ENCODE measurements at regions of chr2 and their contacts with region 1.

Region 1: GRCh38 chr2:54522624-54523281 is 66.6 kb downstream of the SPTBN1 start:
- DNase-seq: peak; percentile 34 to 83 (median 74)
- ATAC-seq: peak; percentile 97
- H3K4me3 ChIP-seq: no peak overlapping the region
- H3K4me3 Mint-ChIP-seq: peak overlapping the region in 4 of 10 donors; percentile 12 to 45 (median 30)
- H3K27ac ChIP-seq: no peak overlapping the region
- H3K27ac Mint-ChIP-seq: peak overlapping the region in 7 of 9 donors; percentile 29 to 90 (median 62)
- H3K4me1 ChIP-seq: no peaks in the 10 kb centered on the region
- H3K4me1 Mint-ChIP-seq: peaks cover 4 to 23% (median 10%) of the 10 kb centered on the region in 7 donors
- H3K27me3 ChIP-seq: no peaks in the 10 kb centered on the region
- H3K27me3 Mint-ChIP-seq: peaks cover 0 to 27% (median 0%) of the 10 kb centered on the region in 5 donors

Region 2: GRCh38 chr2:54106631-54107454 is 415.9 kb before region 1 on chr2:
- CTCF ChIA-PET with region 1: interaction called, 4 read pairs
- POLR2A ChIA-PET with region 1: no interaction called
- intact Hi-C with region 1: loop called in 1 of 2 experiments (anchors 2 kb)
- DNase-seq: peak in 7 of 9 donors; percentile 39 to 68 (median 51)
- ATAC-seq: peak; percentile 86
- H3K4me3 ChIP-seq: no peak overlapping the region
- H3K4me3 Mint-ChIP-seq: peak overlapping the region in 1 of 10 donors; percentile 28
- H3K27ac ChIP-seq: no peak overlapping the region
- H3K27ac Mint-ChIP-seq: peak overlapping the region in 2 of 9 donors; percentile 20 to 31
- H3K4me1 ChIP-seq: peaks cover 0 to 4% of the 10 kb centered on the region in 2 donors
- H3K4me1 Mint-ChIP-seq: peaks cover 0 to 12% (median 9%) of the 10 kb centered on the region in 7 donors
- H3K27me3 ChIP-seq: no peaks in the 10 kb centered on the region
- H3K27me3 Mint-ChIP-seq: peaks cover 0 to 15% (median 0%) of the 10 kb centered on the region in 5 donors

Region 3: GRCh38 chr2:54597153-54597848 is 74.5 kb after region 1 on chr2:
- CTCF ChIA-PET with region 1: interaction called, 10 read pairs
- POLR2A ChIA-PET with region 1: interaction called, 3 read pairs
- intact Hi-C with region 1: no loop called
- DNase-seq: no peak
- ATAC-seq: peak; percentile 39
- H3K4me3 ChIP-seq: peak overlapping the region; percentile 16
- H3K4me3 Mint-ChIP-seq: peak overlapping the region; percentile 79 to 93 (median 86)
- H3K27ac ChIP-seq: peak overlapping the region; percentile 79
- H3K27ac Mint-ChIP-seq: peak overlapping the region; percentile 86 to 98 (median 97)
- H3K4me1 ChIP-seq: peaks cover 41 to 90% of the 10 kb centered on the region in 2 donors
- H3K4me1 Mint-ChIP-seq: peaks cover 59 to 100% (median 97%) of the 10 kb centered on the region in 7 donors
- H3K27me3 ChIP-seq: no peaks in the 10 kb centered on the region
- H3K27me3 Mint-ChIP-seq: no peaks in the 10 kb centered on the region

Region 4: DNA sequence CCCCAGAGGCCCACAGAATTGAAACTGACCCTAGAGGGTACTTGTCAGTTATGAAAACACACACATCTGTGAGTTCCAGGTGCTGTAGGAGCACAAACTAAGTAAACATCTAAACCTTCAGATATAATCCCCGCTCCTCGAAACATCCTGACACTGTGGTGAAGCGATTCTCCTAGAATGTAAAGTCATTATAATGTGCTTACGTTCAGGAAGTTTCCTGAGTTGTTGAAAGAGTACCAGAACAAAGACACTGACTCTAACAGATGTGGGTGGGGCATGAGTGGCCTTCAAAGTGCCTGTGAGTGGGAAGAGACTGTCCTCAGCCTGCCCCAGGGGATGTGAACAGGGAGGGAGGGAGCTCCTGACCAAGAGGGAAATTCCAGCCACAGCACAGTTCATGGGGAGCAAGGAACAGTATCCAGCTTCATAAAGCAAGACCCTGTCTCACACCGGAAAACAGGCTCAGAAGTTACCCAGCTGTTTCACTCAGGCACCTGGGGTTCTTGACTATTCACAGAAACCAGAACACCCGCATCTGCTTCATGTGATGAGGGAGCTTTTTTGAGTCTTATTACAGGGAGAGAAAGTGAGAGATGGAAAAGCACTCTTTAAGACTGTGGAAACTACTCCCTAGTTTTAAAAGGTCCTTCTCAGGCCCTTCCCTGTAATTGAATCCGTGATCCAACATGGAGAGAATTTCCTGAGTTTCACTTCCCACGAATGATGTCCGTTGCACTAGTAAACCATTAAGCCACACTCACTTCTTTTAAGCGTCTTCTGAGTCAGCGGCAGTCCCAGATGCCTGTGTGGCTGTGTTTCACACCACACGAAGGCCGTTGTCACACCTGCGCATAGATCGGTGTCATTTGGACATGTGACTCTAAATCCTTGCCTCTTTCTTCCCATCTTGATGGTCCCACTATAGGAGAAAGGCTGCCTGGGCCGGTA is 112.1 kb after region 1 on chr2:
- CTCF ChIA-PET with region 1: interaction called, 5 read pairs
- POLR2A ChIA-PET with region 1: no interaction called
- intact Hi-C with region 1: loop called (anchors 1 to 5 kb)
- DNase-seq: peak in 7 of 9 donors; percentile 20 to 55 (median 43)
- ATAC-seq: peak; percentile 84
- H3K4me3 ChIP-seq: no peak overlapping the region
- H3K4me3 Mint-ChIP-seq: peak overlapping the region; percentile 3 to 63 (median 48)
- H3K27ac ChIP-seq: peak overlapping the region; percentile 45
- H3K27ac Mint-ChIP-seq: peak overlapping the region; percentile 74 to 93 (median 88)
- H3K4me1 ChIP-seq: peaks cover 0 to 16% of the 10 kb centered on the region in 2 donors
- H3K4me1 Mint-ChIP-seq: peaks cover 25 to 76% (median 57%) of the 10 kb centered on the region in 7 donors
- H3K27me3 ChIP-seq: no peaks in the 10 kb centered on the region
- H3K27me3 Mint-ChIP-seq: no peaks in the 10 kb centered on the region

Region 5: DNA sequence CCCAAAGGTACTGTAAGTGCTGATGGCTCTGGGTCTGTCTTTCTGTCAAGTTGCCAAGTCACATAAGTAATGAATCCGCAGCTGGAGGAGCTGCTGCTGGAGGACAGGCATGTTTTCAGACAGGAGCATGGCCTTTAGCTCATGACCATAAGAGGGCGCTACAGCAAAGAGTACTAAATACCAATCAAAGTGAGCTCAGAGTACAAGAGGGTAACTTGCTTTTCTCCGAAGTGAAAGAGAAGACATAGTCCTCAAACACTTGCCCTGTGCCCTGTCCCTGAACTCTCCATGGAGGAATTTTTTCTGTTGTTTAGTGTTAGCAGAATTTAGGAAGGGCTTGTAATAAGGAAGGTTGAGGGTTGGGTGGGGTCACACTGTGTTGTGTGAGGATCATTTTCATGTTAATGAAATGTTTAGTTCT is 142.7 kb after region 1 on chr2:
- CTCF ChIA-PET with region 1: interaction called, 10 read pairs
- POLR2A ChIA-PET with region 1: no interaction called
- intact Hi-C with region 1: loop called in 1 of 2 experiments (anchors 1 kb)
- DNase-seq: peak in 7 of 9 donors; percentile 15 to 61 (median 50)
- ATAC-seq: peak; percentile 82
- H3K4me3 ChIP-seq: no peak overlapping the region
- H3K4me3 Mint-ChIP-seq: no peak overlapping the region
- H3K27ac ChIP-seq: no peak overlapping the region
- H3K27ac Mint-ChIP-seq: peak overlapping the region in 8 of 9 donors; percentile 42 to 96 (median 86)
- H3K4me1 ChIP-seq: no peaks in the 10 kb centered on the region
- H3K4me1 Mint-ChIP-seq: peaks cover 0 to 20% (median 5%) of the 10 kb centered on the region in 7 donors
- H3K27me3 ChIP-seq: no peaks in the 10 kb centered on the region
- H3K27me3 Mint-ChIP-seq: no peaks in the 10 kb centered on the region

Region 6: GRCh38 chr2:55014962-55015939 is 492.5 kb after region 1 on chr2:
- CTCF ChIA-PET with region 1: no interaction called
- POLR2A ChIA-PET with region 1: no interaction called
- intact Hi-C with region 1: loop called in 1 of 2 experiments (anchors 2 kb)
- DNase-seq: peak in 7 of 9 donors; percentile 13 to 56 (median 41)
- ATAC-seq: peak; percentile 60
- H3K4me3 ChIP-seq: no peak overlapping the region
- H3K4me3 Mint-ChIP-seq: no peak overlapping the region
- H3K27ac ChIP-seq: no peak overlapping the region
- H3K27ac Mint-ChIP-seq: peak overlapping the region in 3 of 9 donors; percentile 0 to 47 (median 14)
- H3K4me1 ChIP-seq: peaks cover 9 to 10% of the 10 kb centered on the region in 2 donors
- H3K4me1 Mint-ChIP-seq: peaks cover 19 to 66% (median 41%) of the 10 kb centered on the region in 7 donors
- H3K27me3 ChIP-seq: no peaks in the 10 kb centered on the region
- H3K27me3 Mint-ChIP-seq: no peaks in the 10 kb centered on the region

Measured in naive thymus-derived CD4-positive, alpha-beta T cell (primary cell).